Activated CD4-positive, alpha-beta T cell treated with anti-CD3 and anti-CD28 coated beads, Interleukin-2, amount 10 ng/mL, durations not matched to agents 7 days and 5 days (primary cell): ENCODE measurements at regions of chr1 and their contacts with region 1.

Region 1: GRCh38 chr1:151156515-151156819 is at the start of gene TNFAIP8L2:
- DNase-seq: peak; percentile 87
- H3K4me3 Mint-ChIP-seq: peak within 1 kb of the TSS; percentile 99
- H3K27ac Mint-ChIP-seq: peak within 1 kb of the TSS; percentile 97
- H3K4me1 Mint-ChIP-seq: peaks cover 57% of the 10 kb centered on the region
- H3K27me3 Mint-ChIP-seq: no peaks in the 10 kb centered on the region
- total RNA-seq, gene TNFAIP8L2: 33.7 to 38.4 TPM

Region 2: GRCh38 chr1:151024540-151025146 is 131.8 kb before region 1 on chr1:
- CTCF ChIA-PET with region 1: interaction called, 11 read pairs
- POLR2A ChIA-PET with region 1: no interaction called
- DNase-seq: peak; percentile 91
- H3K4me3 Mint-ChIP-seq: no peak overlapping the region
- H3K27ac Mint-ChIP-seq: peak overlapping the region; percentile 66
- H3K4me1 Mint-ChIP-seq: peaks cover 9% of the 10 kb centered on the region
- H3K27me3 Mint-ChIP-seq: no peaks in the 10 kb centered on the region

Region 3: GRCh38 chr1:151065089-151065645 is 91.3 kb before region 1 on chr1:
- CTCF ChIA-PET with region 1: no interaction called
- POLR2A ChIA-PET with region 1: no interaction called
- DNase-seq: no peak
- H3K4me3 Mint-ChIP-seq: no peak overlapping the region
- H3K27ac Mint-ChIP-seq: no peak overlapping the region
- H3K4me1 Mint-ChIP-seq: peaks cover 37% of the 10 kb centered on the region
- H3K27me3 Mint-ChIP-seq: no peaks in the 10 kb centered on the region

Region 4: GRCh38 chr1:151098126-151098525 is 58.3 kb before region 1 on chr1:
- CTCF ChIA-PET with region 1: interaction called, 47 read pairs
- POLR2A ChIA-PET with region 1: interaction called, 4 read pairs
- DNase-seq: no peak
- H3K4me3 Mint-ChIP-seq: no peak overlapping the region
- H3K27ac Mint-ChIP-seq: no peak overlapping the region
- H3K4me1 Mint-ChIP-seq: no peaks in the 10 kb centered on the region
- H3K27me3 Mint-ChIP-seq: no peaks in the 10 kb centered on the region